B cell (primary cell): ENCODE measurements at regions of chr19 and their contacts with region 1.

Region 1: DNA sequence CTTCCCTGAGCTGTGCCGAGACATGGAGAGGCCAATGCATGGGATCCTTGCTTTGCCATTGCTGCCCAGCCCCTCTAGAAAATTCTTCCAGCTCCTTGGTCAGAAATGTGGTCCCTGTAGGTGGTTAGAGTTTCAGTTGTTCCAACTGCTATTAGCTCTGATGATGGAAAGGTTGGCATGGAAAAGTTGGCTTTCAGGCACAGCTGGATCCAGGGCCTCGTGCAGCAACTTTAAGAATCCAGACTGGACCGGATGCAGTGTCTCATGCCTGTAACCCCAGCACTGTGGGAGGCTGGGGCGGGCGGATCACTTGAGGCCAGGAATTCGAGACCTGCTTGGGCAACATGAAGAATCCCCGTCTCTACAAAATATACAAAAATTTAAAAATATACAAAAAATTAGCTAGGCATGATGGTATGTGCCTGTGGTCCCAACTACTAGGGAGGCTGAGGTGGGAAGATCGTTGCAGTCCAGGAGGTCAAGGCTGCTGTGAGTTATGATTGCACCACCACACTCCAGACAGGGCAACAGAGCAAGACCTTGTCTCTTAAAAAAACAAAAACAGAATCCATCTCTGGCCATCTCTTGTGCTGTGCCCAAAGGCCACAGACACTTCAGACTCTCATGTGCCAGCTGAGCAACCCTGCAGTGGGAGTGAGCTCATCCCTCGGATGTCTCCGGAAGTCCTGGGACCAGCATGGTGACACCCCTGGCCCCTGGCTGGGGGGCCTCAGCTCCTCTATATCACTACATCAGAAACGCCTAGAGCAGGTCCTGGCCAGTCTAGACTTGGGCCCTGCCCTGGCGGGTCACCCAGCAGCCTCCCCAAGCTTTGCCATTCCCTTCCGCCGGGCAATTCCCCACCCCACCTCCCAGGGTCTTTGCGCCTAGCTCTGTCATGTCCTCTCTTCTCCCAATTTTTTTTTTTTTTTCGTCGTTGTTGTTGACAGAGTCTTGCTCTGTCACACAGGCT is 16.8 kb downstream of the MEX3D start:
- DNase-seq: no peak
- ATAC-seq: no peak
- H3K4me3 ChIP-seq: no peak overlapping the region
- H3K4me3 Mint-ChIP-seq: no peak overlapping the region
- H3K27ac ChIP-seq: no peak overlapping the region
- H3K27ac Mint-ChIP-seq: no peak overlapping the region
- H3K4me1 ChIP-seq: peaks cover 0 to 2% of the 10 kb centered on the region in 2 donors
- H3K4me1 Mint-ChIP-seq: no peaks in the 10 kb centered on the region
- H3K27me3 ChIP-seq: peaks cover 0 to 21% (median 0%) of the 10 kb centered on the region in 4 experiments
- H3K27me3 Mint-ChIP-seq: peaks cover 16% of the 10 kb centered on the region
- CTCF ChIP-seq: no peak

Region 2: DNA sequence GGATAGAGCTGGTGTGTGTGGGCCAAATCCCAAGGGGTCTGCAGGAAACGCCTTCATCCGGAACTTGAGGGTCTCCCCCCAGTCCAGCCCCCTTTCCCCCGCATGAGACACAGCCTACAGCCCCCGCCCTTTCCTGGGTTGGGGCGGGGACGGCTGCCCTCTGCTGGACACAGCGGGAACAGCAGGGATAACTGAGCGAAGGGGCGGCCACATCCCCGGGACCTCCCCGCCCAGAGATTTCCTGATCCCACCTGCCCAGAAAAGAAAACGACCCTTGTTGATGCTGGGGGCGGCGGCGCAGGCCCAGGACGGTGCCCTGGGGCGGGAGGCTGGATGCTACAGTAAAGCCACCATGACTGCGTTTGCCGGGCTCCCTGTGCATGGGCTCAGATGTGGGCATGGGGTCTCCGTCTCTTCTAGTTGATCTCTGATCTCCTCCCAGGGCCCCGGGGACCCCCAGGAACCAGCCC is 216.1 kb after region 1 on chr19:
- CTCF ChIA-PET with region 1: interaction called, 38 read pairs
- POLR2A ChIA-PET with region 1: no interaction called
- intact Hi-C with region 1: loop called (anchors 1 kb)
- DNase-seq: peak; percentile 76
- ATAC-seq: peak; percentile 84
- H3K4me3 ChIP-seq: no peak overlapping the region
- H3K4me3 Mint-ChIP-seq: no peak overlapping the region
- H3K27ac ChIP-seq: no peak overlapping the region
- H3K27ac Mint-ChIP-seq: no peak overlapping the region
- H3K4me1 ChIP-seq: peaks cover 16 to 34% of the 10 kb centered on the region in 2 donors
- H3K4me1 Mint-ChIP-seq: peaks cover 4% of the 10 kb centered on the region
- H3K27me3 ChIP-seq: peaks cover 0 to 89% (median 69%) of the 10 kb centered on the region in 4 experiments
- H3K27me3 Mint-ChIP-seq: peaks cover 62% of the 10 kb centered on the region
- CTCF ChIP-seq: peak; percentile 93

Region 3: DNA sequence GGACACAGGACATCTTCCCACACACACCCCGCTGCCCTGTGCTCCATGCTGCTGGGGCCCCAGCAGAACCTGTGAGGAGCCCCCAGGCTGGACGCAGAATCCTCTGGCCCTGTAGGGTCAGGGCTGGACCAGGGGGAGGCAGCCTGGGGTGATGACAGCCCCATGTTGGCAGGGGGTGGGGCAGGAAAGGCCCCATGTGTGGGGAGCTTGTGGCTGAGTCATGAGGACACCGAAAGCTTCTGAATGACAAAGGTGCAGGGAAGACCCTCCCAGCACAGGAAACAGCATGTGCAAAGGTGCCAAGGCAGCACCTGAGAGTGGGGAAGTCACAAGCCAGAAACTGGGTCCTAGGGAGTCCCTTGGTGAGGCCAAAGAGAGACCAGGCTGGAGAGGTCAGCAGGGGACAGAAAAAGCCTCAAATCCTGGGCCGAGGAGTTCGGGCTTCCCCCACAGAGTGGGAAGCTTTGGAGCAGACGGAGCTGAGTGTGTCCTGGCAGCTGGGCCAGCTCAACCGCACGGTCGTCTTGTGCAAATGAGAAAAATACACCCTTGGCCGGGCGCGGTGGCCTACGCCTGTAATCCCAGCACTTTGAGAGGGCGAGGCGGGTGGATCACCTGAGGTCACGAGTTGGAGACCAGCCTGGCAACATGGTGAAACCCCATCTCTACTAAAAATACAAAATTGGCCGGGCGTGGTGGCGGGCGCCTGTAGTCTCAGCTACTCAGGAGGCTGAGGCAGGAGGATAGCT is 243.2 kb after region 1 on chr19:
- CTCF ChIA-PET with region 1: interaction called, 48 read pairs
- POLR2A ChIA-PET with region 1: no interaction called
- intact Hi-C with region 1: loop called (anchors 1 kb)
- DNase-seq: no peak
- ATAC-seq: no peak
- H3K4me3 ChIP-seq: no peak overlapping the region
- H3K4me3 Mint-ChIP-seq: no peak overlapping the region
- H3K27ac ChIP-seq: no peak overlapping the region
- H3K27ac Mint-ChIP-seq: no peak overlapping the region
- H3K4me1 ChIP-seq: peaks cover 8% of the 10 kb centered on the region in 2 donors
- H3K4me1 Mint-ChIP-seq: no peaks in the 10 kb centered on the region
- H3K27me3 ChIP-seq: peaks cover 0 to 37% (median 3%) of the 10 kb centered on the region in 4 experiments
- H3K27me3 Mint-ChIP-seq: peaks cover 4% of the 10 kb centered on the region
- CTCF ChIP-seq: no peak